ENCODE measurements at regions of chr15 and their contacts with region 1.

Region 1: GRCh38 chr15:33292717-33293307 is 18.0 kb upstream of the RYR3 start:
- DNase-seq: peak in 1 of 2 experiments; percentile 70
- H3K4me3 ChIP-seq: no peak overlapping the region
- H3K27ac ChIP-seq: no peak overlapping the region
- H3K4me1 ChIP-seq: no peaks in the 10 kb centered on the region
- H3K27me3 ChIP-seq: no peaks in the 10 kb centered on the region
- CTCF ChIP-seq: peak in 2 of 3 experiments; percentile 68 to 76; a peak in 3 of 4 replicates
- EP300 ChIP-seq: no peak
- POLR2A ChIP-seq: no peak
- RAD21 ChIP-seq: peak; percentile 93 to 95

Region 2: GRCh38 chr15:33278816-33279612 is 13.8 kb before region 1 on chr15:
- CTCF ChIA-PET with region 1: interaction called, 23 read pairs
- POLR2A ChIA-PET with region 1: no interaction called
- DNase-seq: peak in 1 of 2 experiments; percentile 51
- H3K4me3 ChIP-seq: no peak overlapping the region
- H3K27ac ChIP-seq: no peak overlapping the region
- H3K4me1 ChIP-seq: peaks cover 0 to 3% (median 1%) of the 10 kb centered on the region in 4 experiments; a peak in 3 of 7 replicates
- H3K27me3 ChIP-seq: no peaks in the 10 kb centered on the region; a peak in 1 of 7 replicates
- CTCF ChIP-seq: no peak
- EP300 ChIP-seq: no peak
- POLR2A ChIP-seq: no peak
- RAD21 ChIP-seq: no peak

Region 3: DNA sequence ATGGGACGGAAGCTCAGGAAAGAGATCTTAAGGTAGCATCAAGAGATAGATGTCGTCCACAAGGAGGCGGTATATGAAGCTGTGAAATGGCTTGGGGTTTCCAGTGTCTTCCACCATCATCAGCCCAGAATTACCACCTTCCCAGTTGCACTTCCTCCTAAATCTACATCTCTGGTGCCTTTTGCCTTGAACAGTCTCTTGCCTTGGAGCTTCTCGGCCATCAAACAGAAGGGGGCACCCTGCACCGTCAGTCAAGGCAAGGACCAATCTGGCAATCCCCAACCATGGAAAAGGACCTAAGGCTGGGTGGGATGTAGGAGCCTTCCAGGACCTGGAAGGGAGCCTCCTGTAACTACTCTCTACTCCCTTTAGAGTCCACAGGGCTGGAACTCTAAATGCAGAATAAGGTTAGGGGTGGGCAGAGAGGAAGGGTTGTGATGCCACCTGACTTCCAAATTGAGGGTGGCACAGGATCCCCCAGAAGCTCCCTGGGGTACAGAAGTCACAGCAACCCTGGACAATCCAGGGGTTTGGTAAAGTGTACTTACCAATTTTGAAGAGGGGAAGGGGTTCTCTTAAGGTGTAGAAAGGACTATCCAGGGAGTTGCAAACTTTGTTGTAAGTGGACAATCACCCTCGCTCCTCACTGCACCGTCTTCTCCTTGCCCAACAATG is 16.9 kb after region 1 on chr15:
- CTCF ChIA-PET with region 1: interaction called, 13 read pairs
- POLR2A ChIA-PET with region 1: no interaction called
- DNase-seq: peak in 1 of 2 experiments; percentile 49
- H3K4me3 ChIP-seq: peak overlapping the region in 2 of 4 experiments; percentile 55 to 72; a peak in 3 of 8 replicates
- H3K27ac ChIP-seq: no peak overlapping the region
- H3K4me1 ChIP-seq: peaks cover 0 to 2% (median 0%) of the 10 kb centered on the region in 4 experiments; a peak in 3 of 7 replicates
- H3K27me3 ChIP-seq: peaks cover 15 to 37% (median 32%) of the 10 kb centered on the region in 4 experiments
- CTCF ChIP-seq: peak; percentile 42 to 63 (median 50)
- EP300 ChIP-seq: no peak
- POLR2A ChIP-seq: no peak
- RAD21 ChIP-seq: peak; percentile 70 to 77

Region 4: DNA sequence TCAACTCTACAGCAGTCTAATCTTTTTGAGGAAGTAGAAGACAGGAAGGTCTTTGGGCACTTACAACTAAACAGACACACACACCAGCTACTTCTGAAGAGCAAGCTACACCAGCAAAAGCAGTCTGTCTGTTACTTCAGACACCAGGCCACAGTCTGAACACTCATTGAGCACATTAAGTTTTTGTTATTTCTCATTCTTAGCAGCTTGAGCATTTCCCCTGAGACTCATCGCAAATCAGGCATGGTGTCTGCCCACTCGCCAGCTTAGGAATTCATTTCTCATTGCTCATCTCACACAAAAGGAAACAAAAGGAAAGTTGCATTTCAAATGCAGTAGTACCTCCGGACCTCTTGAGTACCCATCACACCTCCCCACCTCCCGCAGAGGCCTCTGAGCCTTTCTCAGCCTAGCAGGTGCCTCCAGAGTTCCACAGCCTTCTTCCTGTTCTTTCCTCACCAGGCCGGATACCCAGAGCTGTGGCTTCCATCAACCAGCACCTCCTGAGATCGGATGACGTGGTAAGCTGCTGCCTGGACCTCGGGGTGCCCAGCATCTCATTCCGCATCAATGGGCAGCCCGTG is 320.0 kb after region 1 on chr15:
- CTCF ChIA-PET with region 1: interaction called, 12 read pairs
- POLR2A ChIA-PET with region 1: no interaction called
- DNase-seq: no peak
- H3K4me3 ChIP-seq: no peak overlapping the region
- H3K27ac ChIP-seq: no peak overlapping the region
- H3K4me1 ChIP-seq: peaks cover 3 to 6% (median 5%) of the 10 kb centered on the region in 4 experiments; a peak in 5 of 7 replicates
- H3K27me3 ChIP-seq: no peaks in the 10 kb centered on the region; a peak in 1 of 7 replicates
- CTCF ChIP-seq: no peak
- EP300 ChIP-seq: no peak
- POLR2A ChIP-seq: no peak
- RAD21 ChIP-seq: no peak

Region 5: DNA sequence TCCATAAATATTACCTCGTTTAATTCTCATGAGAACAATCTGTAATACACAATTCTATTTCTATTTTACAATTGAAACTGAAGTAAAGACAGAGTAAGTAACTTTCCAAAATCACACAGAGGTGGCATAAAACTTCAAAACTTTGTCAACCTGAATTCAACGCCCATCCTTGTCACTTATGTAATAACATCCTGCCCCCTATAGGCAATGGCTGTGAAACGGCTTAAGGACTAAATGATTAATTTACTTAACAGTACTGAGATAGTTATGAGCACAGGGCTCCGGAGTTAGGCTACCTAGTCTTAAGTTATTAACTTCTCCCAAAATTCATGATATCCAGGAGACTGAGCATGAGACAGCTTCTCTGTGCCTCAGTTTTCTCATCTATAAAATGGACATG is 382.4 kb after region 1 on chr15:
- CTCF ChIA-PET with region 1: interaction called, 15 read pairs
- POLR2A ChIA-PET with region 1: no interaction called
- DNase-seq: no peak
- H3K4me3 ChIP-seq: no peak overlapping the region
- H3K27ac ChIP-seq: no peak overlapping the region
- H3K4me1 ChIP-seq: no peaks in the 10 kb centered on the region
- H3K27me3 ChIP-seq: no peaks in the 10 kb centered on the region
- CTCF ChIP-seq: peak in 2 of 3 experiments; percentile 62 to 83; a peak in 3 of 4 replicates
- EP300 ChIP-seq: no peak
- POLR2A ChIP-seq: no peak
- RAD21 ChIP-seq: peak; percentile 79 to 83

Measured in H1 (cell line).